ENCODE measurements at regions of chr1 and their contacts with region 1.

Region 1: DNA sequence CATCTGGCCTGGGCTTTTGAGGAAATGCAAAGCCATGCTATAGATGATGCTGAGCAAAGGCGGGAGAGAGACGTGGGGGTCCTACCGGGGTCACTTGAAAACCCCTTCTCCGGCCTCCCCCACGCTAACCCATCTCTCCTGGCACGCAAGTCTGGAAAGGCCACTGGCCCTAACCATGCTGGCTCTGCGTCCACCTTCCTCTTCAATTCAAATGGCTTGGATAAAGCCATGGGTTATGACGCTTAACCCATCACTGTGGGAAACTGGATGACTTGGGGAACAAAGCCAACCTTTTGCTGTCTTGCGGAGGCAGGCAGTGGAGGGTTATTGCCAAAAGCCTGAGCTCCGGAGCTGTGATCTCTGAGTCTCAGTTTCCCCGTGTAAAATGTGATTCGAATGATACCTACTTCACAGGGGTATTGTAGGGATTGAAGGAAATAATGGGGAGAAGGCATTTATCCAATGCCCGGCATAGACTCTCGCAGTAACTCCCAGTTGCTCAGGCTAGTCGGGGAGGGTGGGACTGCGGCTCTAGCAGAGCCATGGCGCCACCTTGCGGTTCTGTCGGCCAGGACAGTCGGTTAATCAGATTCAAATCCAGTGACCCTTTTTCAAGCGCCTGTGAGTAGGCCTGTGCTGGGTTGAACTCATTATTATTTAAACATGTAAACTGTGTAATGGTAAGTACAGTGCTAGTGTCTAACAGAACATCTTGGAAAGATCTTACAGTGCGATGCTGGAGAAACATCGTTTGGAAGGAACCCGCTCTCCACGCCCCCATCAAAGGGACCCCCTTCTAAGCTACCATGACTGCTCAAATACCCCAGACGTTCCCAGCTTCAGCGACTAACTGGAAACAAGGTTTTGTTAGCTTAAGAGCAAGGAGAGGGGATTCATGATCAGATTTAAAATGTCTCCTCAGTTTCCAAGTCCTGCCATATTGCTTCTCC is 20.3 kb downstream of the NEK2 start:
- DNase-seq: peak; percentile 80 to 96
- ATAC-seq: peak; percentile 91

Region 2: DNA sequence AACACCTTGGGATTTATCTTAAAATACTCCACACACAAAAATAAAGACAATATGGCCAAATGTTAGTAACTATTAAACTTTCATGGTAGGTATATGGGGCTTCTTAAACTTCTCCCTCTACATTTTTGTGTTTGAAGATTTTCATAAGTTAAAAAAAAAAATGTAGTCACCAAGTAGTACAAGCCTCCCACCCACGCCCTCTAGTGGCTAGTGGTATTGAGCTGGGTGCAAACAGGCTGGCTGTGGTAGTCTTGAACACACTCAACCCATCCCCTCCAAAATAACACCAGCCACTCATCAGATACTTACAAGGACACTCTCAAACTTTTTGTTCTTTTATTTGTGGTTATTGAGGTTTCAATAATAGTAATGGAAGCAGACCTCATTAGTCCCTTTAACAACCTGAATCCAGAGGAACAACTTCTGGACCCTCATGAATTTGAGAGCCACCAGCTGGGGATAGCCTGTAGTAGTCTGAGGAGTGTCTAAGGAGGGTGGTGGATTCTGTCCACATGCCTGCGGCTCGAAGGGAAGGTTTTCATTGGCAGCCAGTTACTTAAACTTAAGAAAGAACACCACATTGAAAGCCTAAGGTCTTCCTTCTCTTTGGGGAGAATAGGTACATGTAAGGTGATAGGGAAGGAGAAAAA is 178.8 kb before region 1 on chr1:
- intact Hi-C with region 1: loop called in 1 of 2 experiments (anchors 10 kb)
- DNase-seq: peak; percentile 58 to 83
- ATAC-seq: peak; percentile 71

Region 3: DNA sequence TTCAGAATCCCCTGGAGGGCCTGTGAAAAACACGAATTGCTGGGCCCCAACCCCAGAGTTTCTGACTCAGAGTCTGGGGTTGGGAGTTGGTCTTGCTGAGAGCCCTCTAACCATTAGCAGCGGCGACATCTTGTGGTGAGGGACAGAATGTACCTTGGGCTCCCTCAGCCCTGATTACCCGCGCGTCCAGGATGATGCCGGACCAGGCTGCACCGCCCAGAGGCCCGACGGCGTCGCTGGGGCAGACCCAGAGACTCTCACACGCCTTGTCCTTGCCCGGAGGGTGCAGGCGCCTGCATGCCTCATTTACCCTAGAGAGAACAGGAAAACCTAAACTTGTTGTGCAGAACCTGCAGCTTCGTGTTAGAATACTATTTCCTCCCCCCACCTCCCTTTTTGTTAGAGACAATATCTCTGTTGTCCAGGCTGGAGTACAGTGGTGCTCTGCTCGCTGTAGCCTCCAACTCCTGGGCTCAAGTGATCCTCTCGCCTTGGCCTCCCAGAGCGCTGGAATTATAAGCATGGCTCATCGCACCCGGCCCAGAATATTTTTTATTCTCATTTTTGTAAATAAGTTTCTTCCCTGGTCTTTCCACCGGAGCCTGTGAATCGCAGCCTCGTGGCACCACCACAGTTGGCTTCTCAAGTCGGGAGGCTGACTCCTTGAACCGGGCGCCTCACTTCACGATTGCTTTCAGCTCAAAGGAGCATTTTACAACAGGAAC is 140.9 kb before region 1 on chr1:
- intact Hi-C with region 1: loop called in 1 of 2 experiments (anchors 2 kb)
- DNase-seq: peak; percentile 87 to 88
- ATAC-seq: peak; percentile 50

Region 4: DNA sequence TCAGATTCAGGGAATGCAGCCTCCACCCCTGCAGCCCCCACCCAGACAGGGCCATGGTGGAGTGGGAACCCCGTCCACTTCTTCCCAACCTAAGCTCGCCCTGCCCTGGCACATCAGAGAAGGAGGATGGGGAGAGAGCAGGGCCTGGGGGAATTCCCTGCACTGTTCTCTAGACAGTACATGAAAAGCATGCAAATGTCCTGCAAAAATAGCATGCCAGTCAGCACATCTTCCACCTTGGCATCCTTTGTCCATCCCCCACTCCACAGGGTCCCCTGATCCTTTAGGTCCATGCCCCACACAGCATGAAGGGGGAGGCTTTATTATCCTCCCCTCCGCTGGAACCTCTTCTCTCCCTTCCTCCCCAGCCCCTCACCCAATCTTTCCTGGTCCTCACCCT is 128.1 kb before region 1 on chr1:
- intact Hi-C with region 1: no loop called
- DNase-seq: no peak
- ATAC-seq: no peak

Region 5: GRCh38 chr1:211578640-211579433 is 76.3 kb before region 1 on chr1 and contains the start of gene SLC30A1:
- intact Hi-C with region 1: loop called in 1 of 2 experiments (anchors 5 kb)
- DNase-seq: peak; percentile 100
- ATAC-seq: peak; percentile 84
- total RNA-seq, gene SLC30A1: 16.6 to 33.1 TPM

Region 6: GRCh38 chr1:212104586-212105325 is 449.6 kb after region 1 on chr1:
- intact Hi-C with region 1: no loop called
- DNase-seq: no peak
- ATAC-seq: peak; percentile 97